Caco-2 (cell line): ENCODE measurements at regions of chr3 and their contacts with region 1.

Region 1: GRCh38 chr3:170414202-170414663 is 4.4 kb upstream of the CLDN11 start:
- DNase-seq: peak in 1 of 2 experiments; percentile 52
- H3K4me3 ChIP-seq: no peak overlapping the region
- H3K4me3 Mint-ChIP-seq: no peak overlapping the region
- H3K27ac Mint-ChIP-seq: no peak overlapping the region
- H3K4me1 ChIP-seq: no peaks in the 10 kb centered on the region
- H3K4me1 Mint-ChIP-seq: no peaks in the 10 kb centered on the region
- H3K27me3 ChIP-seq: 0 out of 2 replicates have a peak, but pooled peaks cover 2% of the 10 kb centered on the region
- H3K27me3 Mint-ChIP-seq: peaks cover 3% of the 10 kb centered on the region
- CTCF ChIP-seq: peak; percentile 79 to 94

Region 2: GRCh38 chr3:169430707-169431404 is 983.4 kb before region 1 on chr3:
- CTCF ChIA-PET with region 1: no interaction called
- POLR2A ChIA-PET with region 1: no interaction called
- intact Hi-C with region 1: no loop called
- DNase-seq: no peak
- H3K4me3 ChIP-seq: no peak overlapping the region
- H3K4me3 Mint-ChIP-seq: no peak overlapping the region
- H3K27ac Mint-ChIP-seq: no peak overlapping the region
- H3K4me1 ChIP-seq: no peaks in the 10 kb centered on the region
- H3K4me1 Mint-ChIP-seq: no peaks in the 10 kb centered on the region
- H3K27me3 ChIP-seq: no peaks in the 10 kb centered on the region
- H3K27me3 Mint-ChIP-seq: no peaks in the 10 kb centered on the region
- CTCF ChIP-seq: no peak

Region 3: GRCh38 chr3:170383567-170383966 is 30.7 kb before region 1 on chr3:
- CTCF ChIA-PET with region 1: no interaction called
- POLR2A ChIA-PET with region 1: no interaction called
- intact Hi-C with region 1: no loop called
- DNase-seq: no peak
- H3K4me3 ChIP-seq: no peak overlapping the region
- H3K4me3 Mint-ChIP-seq: no peak overlapping the region
- H3K27ac Mint-ChIP-seq: no peak overlapping the region
- H3K4me1 ChIP-seq: no peaks in the 10 kb centered on the region
- H3K4me1 Mint-ChIP-seq: no peaks in the 10 kb centered on the region
- H3K27me3 ChIP-seq: no peaks in the 10 kb centered on the region
- H3K27me3 Mint-ChIP-seq: no peaks in the 10 kb centered on the region
- CTCF ChIP-seq: no peak

Region 4: DNA sequence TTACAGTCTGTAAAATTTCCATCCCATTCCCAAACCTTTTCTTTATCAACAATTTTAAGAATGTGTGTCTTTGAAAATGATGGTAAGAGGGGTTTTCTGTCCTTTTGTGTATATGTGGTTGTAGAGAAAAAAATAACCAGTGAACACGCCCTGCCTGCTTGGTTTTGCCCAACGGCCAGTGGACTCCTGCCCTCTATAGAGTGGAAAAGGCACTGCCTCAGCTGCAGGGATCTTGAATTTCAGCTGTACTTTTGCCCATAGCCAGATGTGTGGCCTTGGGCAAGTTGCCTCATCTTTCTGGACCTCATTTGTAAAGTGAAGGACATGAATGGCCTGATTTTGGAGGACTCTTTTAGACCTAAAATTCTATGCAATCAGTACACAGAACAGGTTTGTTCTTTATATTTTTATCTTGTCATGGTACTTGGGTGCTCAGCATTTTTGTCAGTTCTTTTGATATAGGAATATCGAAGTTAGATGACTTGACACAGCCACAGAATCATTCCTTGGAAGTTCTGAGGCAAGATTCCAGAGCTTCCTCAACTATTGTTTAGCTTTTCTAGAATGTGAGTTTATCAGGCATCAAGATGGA is 85.4 kb after region 1 on chr3:
- CTCF ChIA-PET with region 1: interaction called, 3 read pairs
- POLR2A ChIA-PET with region 1: no interaction called
- intact Hi-C with region 1: loop called (anchors 1 kb)
- DNase-seq: peak; percentile 46 to 47
- H3K4me3 ChIP-seq: no peak overlapping the region
- H3K4me3 Mint-ChIP-seq: no peak overlapping the region
- H3K27ac Mint-ChIP-seq: no peak overlapping the region
- H3K4me1 ChIP-seq: no peaks in the 10 kb centered on the region
- H3K4me1 Mint-ChIP-seq: no peaks in the 10 kb centered on the region
- H3K27me3 ChIP-seq: no peaks in the 10 kb centered on the region
- H3K27me3 Mint-ChIP-seq: no peaks in the 10 kb centered on the region
- CTCF ChIP-seq: peak; percentile 46 to 78

Region 5: GRCh38 chr3:170584585-170585007 is 170.4 kb after region 1 on chr3:
- CTCF ChIA-PET with region 1: interaction called, 10 read pairs
- POLR2A ChIA-PET with region 1: no interaction called
- intact Hi-C with region 1: no loop called
- DNase-seq: peak; percentile 55 to 76
- H3K4me3 ChIP-seq: no peak overlapping the region
- H3K4me3 Mint-ChIP-seq: no peak overlapping the region
- H3K27ac Mint-ChIP-seq: no peak overlapping the region
- H3K4me1 ChIP-seq: no peaks in the 10 kb centered on the region
- H3K4me1 Mint-ChIP-seq: no peaks in the 10 kb centered on the region
- H3K27me3 ChIP-seq: no peaks in the 10 kb centered on the region
- H3K27me3 Mint-ChIP-seq: peaks cover 7% of the 10 kb centered on the region
- CTCF ChIP-seq: no peak

Region 6: GRCh38 chr3:170811928-170812591 is 397.8 kb after region 1 on chr3:
- CTCF ChIA-PET with region 1: interaction called, 35 read pairs
- POLR2A ChIA-PET with region 1: no interaction called
- intact Hi-C with region 1: loop called (anchors 1 kb)
- DNase-seq: peak; percentile 77 to 79
- H3K4me3 ChIP-seq: no peak overlapping the region
- H3K4me3 Mint-ChIP-seq: no peak overlapping the region
- H3K27ac Mint-ChIP-seq: no peak overlapping the region
- H3K4me1 ChIP-seq: no peaks in the 10 kb centered on the region
- H3K4me1 Mint-ChIP-seq: no peaks in the 10 kb centered on the region
- H3K27me3 ChIP-seq: no peaks in the 10 kb centered on the region
- H3K27me3 Mint-ChIP-seq: peaks cover 6% of the 10 kb centered on the region
- CTCF ChIP-seq: peak; percentile 88 to 89